H1 (cell line): ENCODE measurements at regions of chr5 and their contacts with region 1.

Region 1: DNA sequence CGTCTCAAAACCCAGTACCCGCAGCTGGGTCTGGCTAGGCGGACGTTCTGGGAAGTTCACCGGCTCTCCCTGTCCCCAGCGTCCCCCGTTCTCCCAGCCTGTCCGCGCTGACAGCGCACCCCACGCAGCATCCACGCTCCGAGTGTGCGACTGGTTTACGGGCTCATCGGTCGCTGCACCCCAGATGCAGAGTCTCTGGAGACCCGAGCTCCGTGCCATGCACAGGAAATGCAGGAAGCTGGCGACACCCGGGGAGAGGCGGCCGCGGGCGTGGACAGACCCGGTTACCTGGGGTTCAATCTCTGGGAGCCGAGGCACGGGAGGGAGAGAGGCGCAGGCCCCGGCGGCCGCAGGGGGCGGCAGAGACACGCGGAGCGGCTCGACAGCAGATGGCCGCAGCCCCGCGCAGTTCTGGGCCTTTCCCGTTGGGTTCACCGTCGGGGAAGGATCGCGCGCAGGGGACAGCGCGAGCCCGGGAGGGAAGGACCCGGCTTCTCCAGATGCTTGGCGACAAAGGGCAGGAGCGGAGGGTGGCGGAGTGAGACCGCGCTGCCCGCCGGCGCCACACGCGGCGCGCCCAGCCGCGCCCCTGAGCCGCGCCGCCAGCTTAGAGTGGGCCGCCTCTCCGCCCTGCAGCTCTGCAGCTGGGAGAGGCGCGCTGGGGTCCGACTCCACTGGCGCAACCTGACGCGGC is 558 bp downstream of the SHROOM1 start:
- DNase-seq: peak in 1 of 2 experiments; percentile 82
- H3K4me3 ChIP-seq: peak overlapping the region; percentile 35 to 74 (median 70)
- H3K27ac ChIP-seq: no peak overlapping the region
- H3K4me1 ChIP-seq: peaks cover 0 to 15% (median 13%) of the 10 kb centered on the region in 4 experiments; a peak in 6 of 7 replicates
- H3K27me3 ChIP-seq: peaks cover 30 to 67% (median 58%) of the 10 kb centered on the region in 4 experiments
- CTCF ChIP-seq: peak in 2 of 3 experiments; percentile 70 to 80; a peak in 3 of 4 replicates
- EP300 ChIP-seq: peak in 1 of 2 experiments; percentile 33; a peak in 1 of 3 replicates
- POLR2A ChIP-seq: peak in 1 of 2 experiments; percentile 23; a peak in 1 of 3 replicates
- RAD21 ChIP-seq: peak; percentile 67 to 77

Region 2: GRCh38 chr5:132807163-132807838 is 22.6 kb before region 1 on chr5:
- CTCF ChIA-PET with region 1: interaction called, 29 read pairs
- POLR2A ChIA-PET with region 1: interaction called, 5 read pairs
- DNase-seq: no peak
- H3K4me3 ChIP-seq: no peak overlapping the region
- H3K27ac ChIP-seq: no peak overlapping the region
- H3K4me1 ChIP-seq: peaks cover 0 to 5% (median 2%) of the 10 kb centered on the region in 4 experiments; a peak in 5 of 7 replicates
- H3K27me3 ChIP-seq: peaks cover 7 to 14% (median 11%) of the 10 kb centered on the region in 4 experiments
- CTCF ChIP-seq: peak; percentile 48 to 70 (median 61)
- EP300 ChIP-seq: no peak
- POLR2A ChIP-seq: no peak
- RAD21 ChIP-seq: peak; percentile 40 to 52

Region 3: GRCh38 chr5:132813599-132814502 is 16.0 kb before region 1 on chr5:
- CTCF ChIA-PET with region 1: interaction called, 77 read pairs
- POLR2A ChIA-PET with region 1: interaction called, 30 read pairs
- DNase-seq: peak in 1 of 2 experiments; percentile 80
- H3K4me3 ChIP-seq: peak overlapping the region; percentile 10 to 52 (median 28); a peak in 7 of 8 replicates
- H3K27ac ChIP-seq: no peak overlapping the region
- H3K4me1 ChIP-seq: peaks cover 0 to 3% (median 0%) of the 10 kb centered on the region in 4 experiments; a peak in 1 of 7 replicates
- H3K27me3 ChIP-seq: peaks cover 34 to 54% (median 46%) of the 10 kb centered on the region in 4 experiments
- CTCF ChIP-seq: no peak
- EP300 ChIP-seq: no peak
- POLR2A ChIP-seq: no peak
- RAD21 ChIP-seq: no peak

Region 4: DNA sequence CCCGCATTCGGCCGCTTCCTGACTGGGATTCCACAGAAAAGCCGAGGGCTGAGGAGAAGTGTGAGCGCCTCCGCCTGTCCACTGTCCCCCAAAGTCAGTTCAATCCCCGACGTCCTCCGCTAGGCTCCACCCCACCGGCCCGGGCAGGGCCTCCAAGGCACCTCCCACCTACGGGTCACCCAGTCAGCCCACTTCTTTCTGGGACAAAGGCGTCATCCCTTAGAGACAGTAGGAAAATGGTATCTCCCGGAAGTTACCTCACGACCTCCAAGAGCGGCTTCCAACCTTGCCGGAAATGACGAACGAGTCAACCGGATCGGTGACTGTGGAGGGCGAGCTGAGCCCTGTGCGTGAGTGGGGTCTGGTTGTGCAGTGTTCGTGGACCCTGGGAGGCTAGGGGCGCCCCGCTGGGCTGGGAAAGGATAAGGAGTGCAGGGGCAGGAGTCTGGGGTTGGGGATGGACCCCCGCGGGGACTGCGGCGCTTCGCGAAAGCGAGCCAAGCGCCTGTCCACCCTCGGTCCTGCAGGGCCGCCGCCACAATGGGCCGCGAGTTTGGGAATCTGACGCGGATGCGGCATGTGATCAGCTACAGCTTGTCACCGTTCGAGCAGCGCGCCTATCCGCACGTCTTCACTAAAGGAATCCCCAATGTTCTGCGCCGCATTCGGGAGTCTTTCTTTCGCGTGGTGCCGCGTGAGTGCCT is 36.6 kb after region 1 on chr5 and contains the starts of genes GDF9 and UQCRQ:
- CTCF ChIA-PET with region 1: interaction called, 465 read pairs
- POLR2A ChIA-PET with region 1: interaction called, 32 read pairs
- DNase-seq: peak; percentile 93 to 97
- H3K4me3 ChIP-seq: peak within 1 kb of the TSS; percentile 80 to 99 (median 88)
- H3K27ac ChIP-seq: peak within 1 kb of the TSS; percentile 93
- H3K4me1 ChIP-seq: peaks cover 4 to 7% (median 6%) of the 10 kb centered on the region in 4 experiments; a peak in 5 of 7 replicates
- H3K27me3 ChIP-seq: no peaks in the 10 kb centered on the region
- CTCF ChIP-seq: peak; percentile 32 to 50 (median 44)
- EP300 ChIP-seq: peak in 1 of 2 experiments; percentile 99; a peak in 2 of 3 replicates
- POLR2A ChIP-seq: peak; percentile 82 to 93; a peak in 2 of 3 replicates
- RAD21 ChIP-seq: peak; percentile 61 to 70
- total RNA-seq, gene GDF9: 0.34 TPM in 1 of 2 replicates, not detected in the other
- total RNA-seq, gene UQCRQ: 282 and 293 TPM in 2 replicates